IMR-90 (cell line): ENCODE measurements at regions of chr7 and their contacts with region 1.

Region 1: GRCh38 chr7:121081327-121081936 is 92.9 kb downstream of the CPED1 start:
- DNase-seq: peak; percentile 85
- ATAC-seq: peak; percentile 19
- H3K4me3 ChIP-seq: no peak overlapping the region
- H3K27ac ChIP-seq: no peak overlapping the region
- H3K4me1 ChIP-seq: peaks cover 19% of the 10 kb centered on the region
- H3K27me3 ChIP-seq: no peaks in the 10 kb centered on the region
- CTCF ChIP-seq: peak; percentile 78
- POLR2A ChIP-seq: no peak
- RAD21 ChIP-seq: peak; percentile 78

Region 2: DNA sequence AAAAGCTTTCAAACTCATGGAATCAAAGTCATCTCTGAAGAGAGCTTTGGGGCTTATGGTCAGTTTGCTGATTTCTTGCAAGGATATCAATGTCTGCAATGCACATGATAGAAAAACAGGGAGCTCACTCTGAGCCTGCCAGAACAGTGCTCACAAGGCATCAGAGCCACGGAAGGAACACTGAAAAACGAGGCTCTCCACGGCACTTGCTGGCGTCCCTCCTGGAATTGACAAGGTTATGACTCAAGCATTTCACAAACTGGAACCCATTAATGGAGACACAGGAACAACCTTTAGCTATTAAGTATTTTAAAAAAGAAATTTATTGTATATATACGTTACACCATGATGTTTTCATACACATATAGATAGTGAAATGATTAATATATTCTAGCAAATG is 542.1 kb before region 1 on chr7:
- CTCF ChIA-PET with region 1: no interaction called
- POLR2A ChIA-PET with region 1: no interaction called
- dilution Hi-C with region 1: no loop called
- in situ Hi-C with region 1: no loop called
- intact Hi-C with region 1: no loop called
- DNase-seq: no peak
- ATAC-seq: no peak
- H3K4me3 ChIP-seq: no peak overlapping the region
- H3K27ac ChIP-seq: no peak overlapping the region
- H3K4me1 ChIP-seq: no peaks in the 10 kb centered on the region
- H3K27me3 ChIP-seq: no peaks in the 10 kb centered on the region
- CTCF ChIP-seq: no peak
- POLR2A ChIP-seq: no peak
- RAD21 ChIP-seq: no peak

Region 3: DNA sequence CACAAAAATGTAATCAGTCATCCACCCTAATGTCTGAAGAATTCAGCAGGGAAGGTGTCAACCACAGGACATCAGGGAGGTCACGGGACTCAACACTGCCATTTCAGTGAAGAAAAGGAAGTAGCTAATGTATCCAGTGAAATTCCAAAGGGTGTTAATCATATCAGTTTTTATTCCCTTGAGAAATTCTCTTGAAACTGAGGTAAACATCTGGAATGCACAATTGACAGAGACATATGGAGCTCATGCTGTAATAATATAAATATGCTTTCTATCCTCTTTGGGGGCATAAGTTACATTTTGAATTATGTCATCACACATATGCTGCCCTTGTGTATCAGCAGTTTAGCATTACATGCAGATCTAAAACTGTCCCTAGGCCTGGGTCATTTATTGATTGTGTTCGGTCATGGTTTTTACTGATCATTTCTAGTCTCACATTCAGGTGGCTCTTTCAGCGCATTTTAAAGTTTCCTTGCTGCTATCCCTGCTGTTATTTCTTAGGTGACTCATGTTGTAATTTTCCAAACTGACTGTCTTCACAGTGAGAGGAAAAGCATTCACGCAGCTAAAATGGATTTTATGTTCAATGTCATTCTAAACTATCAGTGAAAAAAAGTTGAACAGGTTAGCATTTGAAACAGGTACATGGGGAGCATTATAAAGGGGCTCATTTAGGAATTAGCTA is 497.4 kb before region 1 on chr7:
- CTCF ChIA-PET with region 1: no interaction called
- POLR2A ChIA-PET with region 1: no interaction called
- dilution Hi-C with region 1: no loop called
- in situ Hi-C with region 1: no loop called
- intact Hi-C with region 1: loop called (anchors 10 kb)
- DNase-seq: peak; percentile 59
- ATAC-seq: peak; percentile 83
- H3K4me3 ChIP-seq: no peak overlapping the region
- H3K27ac ChIP-seq: no peak overlapping the region
- H3K4me1 ChIP-seq: no peaks in the 10 kb centered on the region
- H3K27me3 ChIP-seq: no peaks in the 10 kb centered on the region
- CTCF ChIP-seq: no peak
- POLR2A ChIP-seq: no peak
- RAD21 ChIP-seq: no peak

Region 4: GRCh38 chr7:120740348-120740747 is 341.1 kb before region 1 on chr7:
- CTCF ChIA-PET with region 1: no interaction called
- POLR2A ChIA-PET with region 1: no interaction called
- dilution Hi-C with region 1: no loop called
- in situ Hi-C with region 1: no loop called
- intact Hi-C with region 1: no loop called
- DNase-seq: peak; percentile 10
- ATAC-seq: no peak; the same call in none of the 2 replicates
- H3K4me3 ChIP-seq: no peak overlapping the region
- H3K27ac ChIP-seq: no peak overlapping the region
- H3K4me1 ChIP-seq: no peaks in the 10 kb centered on the region
- H3K27me3 ChIP-seq: no peaks in the 10 kb centered on the region; the same call in none of the 2 replicates
- CTCF ChIP-seq: no peak
- POLR2A ChIP-seq: no peak
- RAD21 ChIP-seq: no peak

Region 5: GRCh38 chr7:120857588-120858573 is 223.6 kb before region 1 on chr7 and contains the start of gene TSPAN12:
- CTCF ChIA-PET with region 1: no interaction called
- POLR2A ChIA-PET with region 1: no interaction called
- dilution Hi-C with region 1: no loop called
- in situ Hi-C with region 1: no loop called
- intact Hi-C with region 1: loop called (anchors 2 kb)
- DNase-seq: peak; percentile 54
- ATAC-seq: peak; percentile 96
- H3K4me3 ChIP-seq: peak within 1 kb of the TSS; percentile 78
- H3K27ac ChIP-seq: peak within 1 kb of the TSS; percentile 79
- H3K4me1 ChIP-seq: no peaks in the 10 kb centered on the region
- H3K27me3 ChIP-seq: peaks cover 1% of the 10 kb centered on the region
- CTCF ChIP-seq: peak; percentile 65
- POLR2A ChIP-seq: no peak
- RAD21 ChIP-seq: peak; percentile 35
- total RNA-seq, gene TSPAN12: 0.72 and 1.1 TPM in 2 replicates